ENCODE measurements at regions of chr5 and their contacts with region 1.

Region 1: DNA sequence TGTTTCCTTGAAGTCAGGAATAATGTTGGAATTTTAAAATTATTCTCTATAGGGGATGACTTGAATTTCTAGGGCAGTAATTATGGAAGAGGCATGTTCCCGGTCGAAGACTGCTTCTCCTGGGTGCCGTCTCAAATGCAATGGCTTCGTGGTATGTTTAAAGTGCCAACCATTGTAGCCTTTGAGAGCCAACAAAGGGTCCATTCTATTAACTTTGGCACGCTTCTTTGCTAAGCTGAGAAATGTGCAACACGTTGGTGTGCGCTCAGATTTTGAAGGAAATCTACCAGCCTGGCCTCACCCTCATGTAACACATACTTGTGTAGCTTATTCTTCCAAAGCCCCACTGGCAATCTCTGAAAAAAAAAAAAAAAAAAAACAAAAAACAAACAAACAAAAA is 221.2 kb upstream of the ANKH start:
- DNase-seq: no peak
- H3K4me3 ChIP-seq: no peak overlapping the region
- H3K27ac ChIP-seq: no peak overlapping the region
- H3K4me1 ChIP-seq: no peaks in the 10 kb centered on the region
- H3K27me3 ChIP-seq: no peaks in the 10 kb centered on the region
- CTCF ChIP-seq: no peak

Region 2: GRCh38 chr5:14900731-14901461 is 191.9 kb before region 1 on chr5:
- intact Hi-C with region 1: no loop called
- DNase-seq: peak in 2 of 5 donors; percentile 10 to 16
- H3K4me3 ChIP-seq: no peak overlapping the region
- H3K27ac ChIP-seq: no peak overlapping the region
- H3K4me1 ChIP-seq: no peaks in the 10 kb centered on the region
- H3K27me3 ChIP-seq: no peaks in the 10 kb centered on the region
- CTCF ChIP-seq: no peak

Region 3: DNA sequence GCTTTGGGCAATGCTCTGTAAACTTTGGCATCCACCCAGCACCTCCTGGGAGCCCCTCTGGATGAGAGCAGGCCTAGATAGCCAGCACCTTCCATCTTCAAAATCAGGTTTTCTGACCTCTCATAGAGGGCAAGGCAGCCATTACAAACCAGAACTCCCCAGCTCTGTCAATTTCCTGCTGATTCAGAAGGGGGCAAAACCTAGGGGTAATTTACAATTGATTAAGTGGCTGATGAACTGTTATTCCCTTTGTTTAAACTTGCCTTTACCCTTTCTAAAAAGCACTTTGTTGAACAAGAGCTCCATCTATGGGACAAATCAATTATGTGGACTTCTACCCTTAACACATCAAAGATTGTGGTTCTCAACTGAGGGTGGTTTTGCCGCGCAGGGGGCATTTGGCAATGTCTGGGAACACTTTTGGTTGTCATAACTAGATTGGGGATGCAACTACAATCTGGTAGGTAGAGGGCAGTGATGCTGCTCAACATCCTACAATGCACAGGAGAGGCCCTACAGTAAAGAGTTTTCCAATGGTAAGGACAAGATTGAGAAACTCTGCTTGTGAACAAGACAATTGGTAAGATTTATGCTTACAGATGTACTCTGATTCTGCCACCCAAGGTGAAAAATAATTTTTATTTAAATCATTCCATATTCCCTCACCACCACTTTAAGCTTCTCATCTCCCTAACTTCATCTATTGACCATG is 902.7 kb after region 1 on chr5:
- intact Hi-C with region 1: loop called (anchors 10 kb)
- DNase-seq: peak in 2 of 5 donors; percentile 39 to 55
- H3K4me3 ChIP-seq: no peak overlapping the region
- H3K27ac ChIP-seq: no peak overlapping the region
- H3K4me1 ChIP-seq: no peaks in the 10 kb centered on the region
- H3K27me3 ChIP-seq: no peaks in the 10 kb centered on the region
- CTCF ChIP-seq: peak; percentile 19